GM12878 (cell line): ENCODE measurements at regions of chr7 and their contacts with region 1.

Region 1: DNA sequence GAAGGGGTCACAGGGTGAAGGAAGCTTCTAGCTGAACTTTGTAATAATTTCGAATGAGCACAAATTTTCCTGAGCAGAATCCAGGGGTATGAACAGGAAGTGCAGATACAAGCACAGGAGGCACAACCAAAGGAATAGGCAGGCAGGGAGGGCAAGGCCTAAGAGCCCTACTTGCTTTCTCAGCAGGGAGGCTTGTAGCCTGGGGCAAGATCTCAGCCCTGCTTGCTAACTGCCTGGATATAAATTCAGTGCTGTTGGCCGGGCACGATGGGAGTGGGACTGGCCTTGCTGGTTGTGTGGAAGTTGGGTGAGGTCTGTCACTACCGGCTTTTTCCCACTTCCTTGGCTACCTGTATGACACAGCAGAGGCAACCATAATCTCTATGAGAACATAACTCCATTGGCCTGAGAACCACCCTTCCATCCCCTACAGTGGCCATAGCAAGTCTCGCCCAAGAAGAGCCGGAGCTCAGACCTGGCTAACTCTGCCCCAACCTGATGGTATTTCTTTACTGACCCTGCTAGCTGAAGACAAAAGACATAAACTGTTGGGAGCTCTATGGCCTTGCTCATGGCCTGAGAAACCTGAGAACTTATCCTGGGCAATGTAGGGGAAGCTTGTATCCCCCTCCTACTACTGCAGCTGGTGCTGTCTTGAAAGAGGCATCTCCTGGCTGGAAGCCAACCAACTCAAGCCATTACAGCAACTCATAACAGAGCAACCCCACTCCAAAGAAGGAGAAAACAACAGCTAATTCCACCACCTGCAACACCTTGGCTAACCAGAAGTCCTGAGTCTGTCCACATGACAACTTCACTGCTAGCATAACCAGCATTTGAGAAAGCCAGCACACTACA is 27.6 kb downstream of the CLDN12 start:
- DNase-seq: no peak
- ATAC-seq: no peak
- H3K4me3 ChIP-seq: no peak overlapping the region
- H3K27ac ChIP-seq: no peak overlapping the region
- H3K4me1 ChIP-seq: no peaks in the 10 kb centered on the region
- H3K27me3 ChIP-seq: no peaks in the 10 kb centered on the region
- CTCF ChIP-seq: no peak
- EP300 ChIP-seq: no peak
- POLR2A ChIP-seq: no peak
- RAD21 ChIP-seq: no peak

Region 2: GRCh38 chr7:90445633-90446032 is 14.8 kb after region 1 on chr7:
- CTCF ChIA-PET with region 1: interaction called, 4 read pairs
- POLR2A ChIA-PET with region 1: no interaction called
- RAD21 ChIA-PET with region 1: interaction called, 3 read pairs
- SMC1A ChIA-PET with region 1: interaction called, 5 read pairs
- in situ Hi-C with region 1: no loop called
- intact Hi-C with region 1: loop called (anchors 1 kb)
- DNase-seq: no peak
- ATAC-seq: no peak
- H3K4me3 ChIP-seq: no peak overlapping the region
- H3K27ac ChIP-seq: no peak overlapping the region
- H3K4me1 ChIP-seq: no peaks in the 10 kb centered on the region
- H3K27me3 ChIP-seq: no peaks in the 10 kb centered on the region
- CTCF ChIP-seq: no peak
- EP300 ChIP-seq: no peak
- POLR2A ChIP-seq: no peak
- RAD21 ChIP-seq: no peak